Vagina (tissue), 2 donors: ENCODE measurements at regions of chr4 and their contacts with region 1.

Region 1: GRCh38 chr4:52038103-52038912 is at the start of gene SGCB:
- DNase-seq: no peak
- H3K4me3 ChIP-seq: peak within 1 kb of the TSS; percentile 80 to 95
- H3K27ac ChIP-seq: peak within 1 kb of the TSS; percentile 73
- H3K4me1 ChIP-seq: peaks cover 36% of the 10 kb centered on the region
- H3K27me3 ChIP-seq: no peaks in the 10 kb centered on the region
- CTCF ChIP-seq: no peak
- POLR2A ChIP-seq: peak in 1 of 2 donors; percentile 11
- total RNA-seq, gene SGCB: 26.5 TPM

Region 2: DNA sequence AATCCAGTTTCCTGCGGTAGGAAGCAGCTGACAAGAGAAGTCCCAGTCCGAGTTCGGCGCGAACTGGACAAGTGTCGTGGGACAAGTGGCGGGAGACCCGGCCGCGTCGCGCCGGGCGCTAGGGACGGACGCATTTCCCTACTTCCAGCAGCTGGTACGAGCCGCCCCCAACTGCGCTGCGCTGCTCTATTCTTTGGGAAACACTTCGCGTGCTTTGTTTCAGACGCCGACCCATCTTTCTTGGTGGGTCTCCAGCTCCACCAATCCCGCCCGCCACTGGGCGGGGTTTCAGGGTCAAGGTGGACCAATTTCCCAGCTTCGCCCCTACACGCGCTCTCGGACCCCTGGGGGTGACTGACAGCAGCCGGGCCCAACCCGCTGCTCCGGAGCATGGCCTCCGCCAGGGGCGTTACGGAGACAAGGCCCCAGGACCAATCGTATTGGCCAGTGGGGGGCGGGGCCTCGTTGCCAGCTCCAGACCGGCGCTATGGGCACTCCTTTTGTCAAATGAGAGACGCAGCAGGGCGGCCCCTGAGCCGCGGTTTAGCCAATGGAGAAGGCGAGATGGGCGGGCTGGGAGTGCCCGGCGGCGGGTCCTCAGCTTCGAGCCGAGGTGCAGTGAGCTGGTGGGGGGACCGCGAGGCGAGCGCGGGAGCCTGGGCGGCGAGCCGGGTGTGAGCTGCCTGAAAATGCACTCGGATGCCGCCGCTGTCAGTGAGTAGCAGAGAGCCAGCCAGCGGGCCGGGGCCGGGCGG is 195.6 kb before region 1 on chr4 and contains the start of gene DCUN1D4:
- intact Hi-C with region 1: loop called (anchors 5 kb)
- DNase-seq: peak; percentile 99 to 100
- H3K4me3 ChIP-seq: peak within 1 kb of the TSS; percentile 63 to 77
- H3K27ac ChIP-seq: peak within 1 kb of the TSS; percentile 94
- H3K4me1 ChIP-seq: peaks cover 8% of the 10 kb centered on the region
- H3K27me3 ChIP-seq: no peaks in the 10 kb centered on the region
- CTCF ChIP-seq: no peak
- POLR2A ChIP-seq: peak in 1 of 2 donors; percentile 80
- total RNA-seq, gene DCUN1D4: 47.4 TPM

Region 3: DNA sequence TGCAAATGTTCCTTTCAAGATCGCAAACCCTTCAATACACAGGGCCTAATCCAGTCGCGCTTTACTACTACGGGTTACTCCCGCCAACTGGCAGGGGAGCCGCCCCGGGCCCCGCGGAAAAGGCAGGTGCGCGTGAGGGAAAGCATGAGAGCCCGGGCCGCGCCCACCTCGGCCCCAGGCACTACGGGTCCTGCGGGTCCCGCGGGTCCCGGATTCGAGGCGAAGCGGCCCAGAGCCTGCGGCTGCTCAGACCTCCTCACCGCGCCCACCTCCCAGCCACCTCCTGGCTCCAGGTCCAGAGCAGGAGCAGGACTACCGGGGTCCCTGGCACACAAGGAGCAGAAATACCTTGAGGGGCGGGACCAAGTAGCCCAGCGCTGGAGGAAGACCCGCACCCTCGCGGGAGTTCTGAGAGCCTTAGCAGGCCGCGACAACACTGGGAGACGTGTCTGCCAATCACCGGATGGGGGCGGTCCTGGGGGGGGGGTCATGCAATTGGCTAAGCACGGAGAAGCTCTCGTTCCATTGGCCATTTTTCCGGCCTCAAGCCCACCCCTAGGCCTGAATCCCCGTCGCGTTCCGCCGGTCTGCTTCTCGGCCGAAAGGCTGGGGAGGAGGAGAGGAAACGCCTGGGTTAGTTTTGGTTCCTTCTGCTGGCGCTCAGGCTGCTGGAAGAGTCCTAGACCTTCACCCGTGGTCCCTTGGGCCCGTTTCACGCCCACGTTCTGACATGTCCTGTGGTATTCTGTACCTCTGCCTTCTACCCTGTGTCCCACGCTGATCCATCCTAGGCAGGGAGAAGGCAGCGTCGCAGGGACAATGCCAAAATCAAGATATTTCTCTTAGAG is 683.9 kb after region 1 on chr4:
- intact Hi-C with region 1: no loop called
- DNase-seq: peak in 1 of 2 donors; percentile 96
- H3K4me3 ChIP-seq: peak overlapping the region; percentile 61 to 78
- H3K27ac ChIP-seq: peak overlapping the region; percentile 84
- H3K4me1 ChIP-seq: peaks cover 8% of the 10 kb centered on the region
- H3K27me3 ChIP-seq: no peaks in the 10 kb centered on the region
- CTCF ChIP-seq: no peak
- POLR2A ChIP-seq: peak in 1 of 2 donors; percentile 40